ENCODE measurements at regions of chr18 and their contacts with region 1.

Region 1: GRCh38 chr18:5619376-5619775 is 75.6 kb upstream of the EPB41L3 start:
- DNase-seq: no peak
- H3K4me3 ChIP-seq: no peak overlapping the region
- H3K27ac ChIP-seq: no peak overlapping the region
- H3K4me1 ChIP-seq: no peaks in the 10 kb centered on the region
- H3K27me3 ChIP-seq: no peaks in the 10 kb centered on the region
- CTCF ChIP-seq: no peak
- POLR2A ChIP-seq: no peak

Region 2: GRCh38 chr18:5556310-5556974 is 62.9 kb before region 1 on chr18:
- intact Hi-C with region 1: loop called (anchors 10 kb)
- DNase-seq: no peak
- H3K4me3 ChIP-seq: no peak overlapping the region
- H3K27ac ChIP-seq: peak overlapping the region in 3 of 4 donors; percentile 6 to 63 (median 45)
- H3K4me1 ChIP-seq: peaks cover 0 to 16% (median 2%) of the 10 kb centered on the region in 3 donors
- H3K27me3 ChIP-seq: no peaks in the 10 kb centered on the region
- CTCF ChIP-seq: peak in 1 of 6 experiments; percentile 22
- POLR2A ChIP-seq: no peak

Region 3: GRCh38 chr18:5729983-5730699 is 110.8 kb after region 1 on chr18:
- intact Hi-C with region 1: no loop called
- DNase-seq: no peak
- H3K4me3 ChIP-seq: no peak overlapping the region
- H3K27ac ChIP-seq: peak overlapping the region in 2 of 4 donors; percentile 9 to 72
- H3K4me1 ChIP-seq: no peaks in the 10 kb centered on the region
- H3K27me3 ChIP-seq: no peaks in the 10 kb centered on the region
- CTCF ChIP-seq: no peak
- POLR2A ChIP-seq: no peak